ENCODE measurements at regions of chr2 and their contacts with region 1.

Region 1: GRCh38 chr2:148552675-148553331 is 91.7 kb upstream of the EPC2 start:
- DNase-seq: peak in 6 of 10 donors; percentile 32 to 60 (median 42)
- ATAC-seq: peak; percentile 86 to 93
- H3K4me3 Mint-ChIP-seq: no peak overlapping the region
- H3K27ac Mint-ChIP-seq: no peak overlapping the region
- H3K4me1 Mint-ChIP-seq: peaks cover 1 to 7% (median 4%) of the 10 kb centered on the region in 4 donors
- H3K27me3 Mint-ChIP-seq: no peaks in the 10 kb centered on the region

Region 2: GRCh38 chr2:148540022-148540421 is 12.8 kb before region 1 on chr2:
- POLR2A ChIA-PET with region 1: interaction called, 10 read pairs
- DNase-seq: peak in 3 of 10 donors; percentile 20 to 45 (median 40)
- ATAC-seq: peak; percentile 84 to 85
- H3K4me3 Mint-ChIP-seq: peak overlapping the region in 9 of 10 donors; percentile 25 to 83 (median 70)
- H3K27ac Mint-ChIP-seq: peak overlapping the region; percentile 71 to 95 (median 88)
- H3K4me1 Mint-ChIP-seq: peaks cover 29 to 57% (median 48%) of the 10 kb centered on the region in 4 donors
- H3K27me3 Mint-ChIP-seq: no peaks in the 10 kb centered on the region

Measured in naive thymus-derived CD8-positive, alpha-beta T cell (primary cell).